Activated CD4-positive, alpha-beta T cell treated with anti-CD3 and anti-CD28 coated beads, Interleukin-2, amount 10 ng/mL, durations not matched to agents 7 days and 5 days (primary cell): ENCODE measurements at regions of chr17 and their contacts with region 1.

Region 1: DNA sequence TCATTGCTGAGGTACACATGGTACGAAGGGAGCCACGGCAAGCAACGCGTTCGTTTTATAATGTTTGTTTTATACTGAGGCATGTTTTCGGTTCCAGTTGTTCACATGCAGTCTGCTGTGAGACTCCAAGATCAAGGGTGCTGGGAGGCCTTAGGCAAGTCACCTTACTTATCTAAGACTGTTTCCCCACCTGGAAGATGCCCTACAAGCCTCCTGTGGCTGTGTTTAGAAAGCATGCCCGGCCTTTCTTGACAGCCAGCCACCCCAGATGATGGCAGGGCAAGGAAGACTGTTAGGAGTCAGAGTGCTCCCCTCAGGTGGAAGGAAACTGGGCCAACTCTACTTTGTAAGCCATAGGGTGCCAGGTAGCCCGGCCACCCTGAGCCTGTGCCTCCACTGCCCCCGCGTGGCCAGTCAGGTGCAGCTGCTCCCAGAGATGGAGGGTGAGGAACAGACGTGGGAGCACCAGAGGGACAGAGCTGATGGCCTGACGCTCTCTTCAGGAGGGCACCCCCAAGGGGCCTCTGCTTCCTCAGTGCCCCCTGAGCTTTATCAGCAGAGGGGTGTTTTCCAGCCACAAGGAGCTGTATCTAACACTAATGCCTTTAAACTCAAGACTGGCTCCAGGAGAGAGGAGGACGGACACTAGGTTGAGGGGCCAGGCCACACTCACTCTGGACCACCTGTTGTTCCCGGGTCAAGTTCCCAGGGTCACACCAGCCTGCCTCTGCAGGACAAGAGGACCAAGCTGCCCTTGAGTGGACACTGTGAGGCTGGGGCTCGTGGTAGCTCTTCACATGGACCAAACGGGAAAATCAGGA is 5.4 kb downstream of the NAT9 start:
- DNase-seq: peak; percentile 74
- H3K4me3 Mint-ChIP-seq: no peak overlapping the region
- H3K27ac Mint-ChIP-seq: peak overlapping the region; percentile 61
- H3K4me1 Mint-ChIP-seq: peaks cover 47% of the 10 kb centered on the region
- H3K27me3 Mint-ChIP-seq: no peaks in the 10 kb centered on the region

Region 2: DNA sequence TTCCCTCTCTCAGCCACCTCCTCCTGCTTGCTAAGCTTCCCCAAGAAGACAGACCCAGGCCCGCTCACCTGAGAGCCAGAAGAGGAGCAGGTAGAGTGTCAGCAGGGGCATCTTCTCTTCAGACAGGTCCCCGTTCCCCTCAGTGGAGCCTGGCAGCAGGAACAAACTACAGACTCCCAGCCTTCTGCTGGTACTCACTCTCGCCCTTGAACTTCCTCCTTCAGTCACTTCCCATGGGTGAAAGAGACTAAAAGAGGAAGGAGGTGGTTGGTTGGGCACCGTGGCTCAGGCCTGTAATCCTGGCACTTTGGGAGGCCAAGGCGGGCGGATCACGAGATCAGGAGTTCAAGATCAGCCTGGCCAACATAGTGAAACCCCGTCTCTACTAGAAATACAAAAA is 58.0 kb before region 1 on chr17 and contains the start of gene CD300LF:
- CTCF ChIA-PET with region 1: no interaction called
- POLR2A ChIA-PET with region 1: no interaction called
- DNase-seq: no peak
- H3K4me3 Mint-ChIP-seq: no peak within 1 kb of the TSS
- H3K27ac Mint-ChIP-seq: peak within 1 kb of the TSS; percentile 46
- H3K4me1 Mint-ChIP-seq: peaks cover 6% of the 10 kb centered on the region
- H3K27me3 Mint-ChIP-seq: peaks cover 28% of the 10 kb centered on the region
- total RNA-seq, gene CD300LF: not detected

Region 3: DNA sequence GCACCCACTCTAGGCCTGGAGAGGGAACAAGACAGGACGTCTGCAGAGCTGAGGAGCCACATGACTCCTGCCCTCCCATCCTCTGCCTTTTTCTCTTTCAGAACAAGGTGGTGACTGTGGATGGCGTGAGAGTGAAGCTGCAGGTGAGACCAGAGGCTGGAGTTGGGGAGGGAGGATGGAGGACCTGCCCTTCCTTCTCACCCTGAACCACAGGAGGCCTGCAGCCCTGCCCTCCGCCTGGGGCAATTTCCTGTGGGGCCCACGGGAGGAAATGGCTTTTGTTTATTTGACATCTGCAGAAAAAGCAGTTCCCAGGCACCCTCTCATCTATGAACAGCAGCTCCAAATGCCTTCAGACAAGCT is 28.6 kb before region 1 on chr17:
- CTCF ChIA-PET with region 1: interaction called, 34 read pairs
- POLR2A ChIA-PET with region 1: no interaction called
- DNase-seq: peak; percentile 82
- H3K4me3 Mint-ChIP-seq: peak overlapping the region; percentile 67
- H3K27ac Mint-ChIP-seq: peak overlapping the region; percentile 96
- H3K4me1 Mint-ChIP-seq: peaks cover 91% of the 10 kb centered on the region
- H3K27me3 Mint-ChIP-seq: no peaks in the 10 kb centered on the region